ENCODE measurements at regions of chr11 and their contacts with region 1.

Region 1: DNA sequence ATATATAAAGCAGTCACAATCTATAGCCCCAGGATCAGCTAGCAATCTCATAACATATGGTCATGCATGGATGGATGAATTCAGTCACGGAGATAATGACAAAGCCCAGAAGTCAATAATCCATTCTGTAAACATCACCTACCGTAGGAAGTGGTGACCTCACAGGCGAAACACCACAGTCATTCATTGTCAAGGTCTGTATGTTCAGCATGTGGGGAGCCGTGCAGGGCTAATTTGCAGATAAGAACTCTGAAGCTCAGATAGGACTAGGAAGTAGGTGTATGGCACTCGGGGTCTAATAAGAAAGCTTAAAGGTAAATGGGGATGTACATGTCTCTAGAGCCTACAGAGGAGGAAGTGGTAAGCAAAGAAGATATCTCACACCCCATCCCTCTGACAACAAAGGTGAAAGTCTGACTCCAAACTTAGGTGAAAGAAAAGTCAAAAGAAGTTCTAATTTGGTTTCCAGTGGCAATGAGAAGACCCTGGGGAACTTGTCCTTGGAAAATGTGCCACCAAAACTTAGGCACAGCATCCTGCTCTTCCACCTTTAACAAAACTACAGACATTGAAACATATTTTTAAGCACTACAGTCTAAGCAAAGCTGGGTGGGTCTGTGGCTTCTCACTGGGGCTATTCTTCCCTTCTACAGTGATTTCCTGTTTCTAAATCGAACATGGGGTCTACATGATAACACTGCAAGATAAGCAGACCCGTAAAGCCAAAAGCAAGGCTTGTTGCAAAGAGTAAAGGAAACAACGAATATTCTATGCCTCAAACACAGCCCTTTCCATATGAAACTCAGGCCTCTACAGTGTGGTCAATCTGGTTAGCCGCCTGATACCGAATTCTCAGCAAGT is 5.2 kb downstream of the CRTAM start:
- DNase-seq: peak; percentile 20 to 79 (median 55)
- ATAC-seq: peak; percentile 90 to 93 (median 92)
- H3K4me3 ChIP-seq: peak overlapping the region; percentile 17 to 26
- H3K4me3 Mint-ChIP-seq: peak overlapping the region; percentile 48 to 66 (median 48)
- H3K27ac ChIP-seq: peak overlapping the region; percentile 91
- H3K27ac Mint-ChIP-seq: peak overlapping the region; percentile 86 to 87
- H3K4me1 ChIP-seq: peaks cover 45 to 61% of the 10 kb centered on the region in 2 experiments
- H3K4me1 Mint-ChIP-seq: peaks cover 57 to 72% (median 72%) of the 10 kb centered on the region in 3 donors
- H3K27me3 ChIP-seq: no peaks in the 10 kb centered on the region
- H3K27me3 Mint-ChIP-seq: no peaks in the 10 kb centered on the region

Region 2: GRCh38 chr11:122717264-122717867 is 126.1 kb before region 1 on chr11:
- CTCF ChIA-PET with region 1: no interaction called
- POLR2A ChIA-PET with region 1: no interaction called
- DNase-seq: peak in 19 of 35 experiments; percentile 10 to 48 (median 21)
- ATAC-seq: peak; percentile 47 to 56 (median 52)
- H3K4me3 ChIP-seq: no peak overlapping the region
- H3K4me3 Mint-ChIP-seq: no peak overlapping the region
- H3K27ac ChIP-seq: peak overlapping the region; percentile 52
- H3K27ac Mint-ChIP-seq: peak overlapping the region; percentile 68 to 83
- H3K4me1 ChIP-seq: peaks cover 29 to 42% of the 10 kb centered on the region in 2 experiments
- H3K4me1 Mint-ChIP-seq: peaks cover 61 to 83% (median 70%) of the 10 kb centered on the region in 3 donors
- H3K27me3 ChIP-seq: no peaks in the 10 kb centered on the region
- H3K27me3 Mint-ChIP-seq: no peaks in the 10 kb centered on the region

Region 3: DNA sequence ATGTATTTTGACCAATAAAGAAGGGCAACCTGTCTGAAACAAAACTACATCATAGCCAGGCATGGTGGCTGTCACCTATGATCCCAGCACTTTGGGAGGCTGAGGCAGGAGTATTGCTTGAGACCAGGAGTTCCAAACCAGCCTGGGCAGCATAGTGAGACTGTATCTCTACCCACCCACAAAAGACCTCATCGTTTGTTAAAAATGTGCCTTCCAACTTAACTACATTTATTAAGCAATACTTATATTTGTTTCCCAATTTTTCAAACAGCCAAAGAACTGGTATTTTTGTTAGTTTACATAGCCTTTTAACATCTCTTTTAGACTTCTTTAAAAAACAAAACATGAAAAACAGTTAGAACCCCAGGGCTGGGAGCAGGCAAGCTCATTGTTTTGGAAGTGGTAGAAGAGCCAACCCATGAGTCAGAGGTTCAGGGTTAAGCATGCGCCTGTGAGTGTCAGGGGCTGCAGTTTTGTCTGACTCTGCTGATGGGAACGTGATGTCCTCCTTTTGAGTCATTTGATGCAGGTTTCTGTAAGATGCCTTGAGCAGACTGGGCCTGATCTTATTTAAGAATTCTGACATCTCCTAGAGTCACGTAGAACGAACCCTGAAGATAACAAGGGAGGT is 59.1 kb before region 1 on chr11:
- CTCF ChIA-PET with region 1: no interaction called
- POLR2A ChIA-PET with region 1: no interaction called
- DNase-seq: no peak
- ATAC-seq: no peak
- H3K4me3 ChIP-seq: no peak overlapping the region
- H3K4me3 Mint-ChIP-seq: no peak overlapping the region
- H3K27ac ChIP-seq: no peak overlapping the region
- H3K27ac Mint-ChIP-seq: no peak overlapping the region
- H3K4me1 ChIP-seq: no peaks in the 10 kb centered on the region
- H3K4me1 Mint-ChIP-seq: peaks cover 0 to 9% (median 3%) of the 10 kb centered on the region in 3 donors
- H3K27me3 ChIP-seq: no peaks in the 10 kb centered on the region
- H3K27me3 Mint-ChIP-seq: no peaks in the 10 kb centered on the region

Region 4: DNA sequence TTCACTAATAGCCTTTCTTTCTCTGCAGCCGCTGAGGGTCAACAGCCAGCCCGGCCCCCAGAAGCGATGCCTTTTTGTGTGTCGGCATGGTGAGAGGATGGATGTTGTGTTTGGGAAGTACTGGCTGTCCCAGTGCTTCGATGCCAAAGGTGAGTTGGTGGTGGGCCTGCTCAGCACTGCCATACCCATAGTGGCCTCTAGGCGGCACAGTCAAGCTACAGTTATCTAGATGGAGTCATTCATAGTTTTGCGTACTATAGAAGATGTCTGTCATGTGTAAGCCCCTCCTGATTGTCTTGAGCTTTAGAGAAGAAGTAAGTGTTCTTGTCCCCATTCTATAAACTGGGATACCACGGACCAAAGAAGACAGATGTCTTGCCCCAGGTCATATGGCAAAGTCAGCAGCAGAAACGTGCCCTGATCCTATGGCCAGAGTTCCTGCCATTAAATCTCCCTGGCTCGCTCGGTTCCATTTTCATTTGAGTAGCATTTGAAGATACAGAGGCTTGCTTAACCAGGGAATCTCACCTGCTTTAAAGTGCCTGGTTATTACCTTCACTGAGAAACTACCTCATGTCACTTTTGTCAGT is 47.3 kb before region 1 on chr11:
- CTCF ChIA-PET with region 1: interaction called, 5 to 14 read pairs
- POLR2A ChIA-PET with region 1: no interaction called
- DNase-seq: peak; percentile 12 to 80 (median 64)
- ATAC-seq: peak; percentile 81 to 86 (median 84)
- H3K4me3 ChIP-seq: no peak overlapping the region
- H3K4me3 Mint-ChIP-seq: no peak overlapping the region
- H3K27ac ChIP-seq: no peak overlapping the region
- H3K27ac Mint-ChIP-seq: no peak overlapping the region
- H3K4me1 ChIP-seq: peaks cover 0 to 2% of the 10 kb centered on the region in 2 experiments
- H3K4me1 Mint-ChIP-seq: peaks cover 0 to 8% (median 0%) of the 10 kb centered on the region in 3 donors
- H3K27me3 ChIP-seq: no peaks in the 10 kb centered on the region
- H3K27me3 Mint-ChIP-seq: no peaks in the 10 kb centered on the region

Measured in T-cell (primary cell).